ENCODE measurements at regions of chr12 and their contacts with region 1.

Region 1: DNA sequence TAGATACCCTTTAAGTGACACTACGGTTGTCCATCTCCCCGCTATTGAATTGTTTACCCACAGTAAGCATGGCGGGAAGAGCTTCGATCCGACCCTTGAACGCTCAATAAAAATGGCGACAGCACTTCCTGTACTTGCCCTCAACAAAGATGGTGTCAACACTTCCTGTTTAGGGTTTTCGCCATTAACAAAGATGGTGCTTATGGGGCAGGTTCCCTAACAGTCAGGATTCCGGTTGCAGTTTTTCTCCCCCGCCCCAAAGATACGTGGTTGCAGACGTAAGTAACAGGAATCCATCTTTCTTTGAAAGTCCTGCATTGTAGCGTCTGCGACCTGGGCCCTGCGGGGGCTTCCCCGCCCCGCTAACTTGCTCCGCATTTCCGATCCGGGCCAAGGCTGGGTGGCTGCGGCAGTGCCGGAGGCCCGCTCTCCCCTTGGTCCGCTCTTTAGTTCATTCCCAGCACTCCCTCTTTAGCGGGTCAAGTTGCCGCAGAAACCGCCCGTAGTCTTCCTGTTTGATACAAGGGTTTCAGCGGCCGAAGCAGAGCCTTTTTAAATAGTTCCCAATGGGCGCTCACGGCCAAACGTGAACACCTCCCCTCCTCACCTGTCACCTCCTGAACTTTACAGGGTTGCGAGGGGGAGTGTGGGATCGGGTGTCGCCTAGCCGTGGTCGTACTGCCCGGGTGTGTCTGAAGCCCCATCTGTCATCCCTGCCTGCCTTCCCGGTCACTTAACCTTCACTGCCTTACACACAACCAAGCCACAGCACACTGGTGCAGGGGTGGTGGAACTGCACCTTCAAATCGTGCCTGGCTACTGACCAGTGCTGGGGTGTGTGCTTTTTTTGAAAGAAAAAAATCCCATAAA is at the start of gene CRADD:
- DNase-seq: peak; percentile 92
- H3K4me3 Mint-ChIP-seq: peak within 1 kb of the TSS; percentile 89
- H3K27ac Mint-ChIP-seq: peak within 1 kb of the TSS; percentile 99
- H3K4me1 Mint-ChIP-seq: peaks cover 40% of the 10 kb centered on the region
- H3K27me3 Mint-ChIP-seq: peaks cover 9% of the 10 kb centered on the region
- total RNA-seq, gene CRADD: 14.3 to 15.6 TPM

Region 2: GRCh38 chr12:93098077-93098476 is 579.4 kb before region 1 on chr12:
- CTCF ChIA-PET with region 1: no interaction called
- intact Hi-C with region 1: loop called (anchors 10 kb)
- DNase-seq: peak; percentile 91
- H3K4me3 Mint-ChIP-seq: no peak overlapping the region
- H3K27ac Mint-ChIP-seq: peak overlapping the region; percentile 38
- H3K4me1 Mint-ChIP-seq: peaks cover 10% of the 10 kb centered on the region
- H3K27me3 Mint-ChIP-seq: no peaks in the 10 kb centered on the region

Region 3: DNA sequence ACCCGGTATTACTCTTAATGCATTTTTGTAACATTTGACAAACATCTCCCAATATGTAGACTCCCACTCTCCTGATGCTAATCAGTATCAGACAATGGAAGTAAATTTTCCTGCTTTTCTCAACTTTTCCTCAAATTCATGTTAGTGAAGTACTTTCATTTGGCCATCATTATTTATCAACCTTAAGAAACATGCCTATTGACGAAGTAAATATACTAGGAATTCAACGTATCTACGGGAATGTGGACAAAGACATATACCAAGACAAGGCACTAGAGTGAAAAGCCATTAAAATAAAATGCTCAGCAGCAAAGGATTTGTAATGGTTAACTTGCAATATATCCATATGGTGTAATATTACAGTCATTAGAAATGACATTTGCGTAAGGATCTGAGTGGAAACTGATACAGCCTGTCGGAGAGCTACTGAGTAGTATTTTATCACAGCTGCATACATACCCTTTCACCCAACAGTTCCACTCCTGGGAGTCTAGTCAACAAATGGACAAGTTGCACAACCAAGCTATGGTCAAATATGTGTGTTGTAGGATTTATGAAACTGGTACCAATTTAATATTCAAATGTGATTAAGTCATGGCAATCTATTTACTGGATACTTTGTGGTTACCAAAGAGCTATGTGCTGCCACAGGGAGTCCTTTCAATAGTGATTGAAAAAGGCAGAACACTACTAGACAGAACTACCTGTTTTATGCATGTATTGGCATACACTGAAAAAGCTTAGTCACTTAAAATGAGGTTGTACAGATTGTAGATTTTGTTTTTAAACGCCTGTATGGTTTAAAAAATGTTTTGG is 273.2 kb before region 1 on chr12:
- CTCF ChIA-PET with region 1: no interaction called
- intact Hi-C with region 1: no loop called
- DNase-seq: no peak
- H3K4me3 Mint-ChIP-seq: no peak overlapping the region
- H3K27ac Mint-ChIP-seq: no peak overlapping the region
- H3K4me1 Mint-ChIP-seq: peaks cover 35% of the 10 kb centered on the region
- H3K27me3 Mint-ChIP-seq: no peaks in the 10 kb centered on the region

Region 4: DNA sequence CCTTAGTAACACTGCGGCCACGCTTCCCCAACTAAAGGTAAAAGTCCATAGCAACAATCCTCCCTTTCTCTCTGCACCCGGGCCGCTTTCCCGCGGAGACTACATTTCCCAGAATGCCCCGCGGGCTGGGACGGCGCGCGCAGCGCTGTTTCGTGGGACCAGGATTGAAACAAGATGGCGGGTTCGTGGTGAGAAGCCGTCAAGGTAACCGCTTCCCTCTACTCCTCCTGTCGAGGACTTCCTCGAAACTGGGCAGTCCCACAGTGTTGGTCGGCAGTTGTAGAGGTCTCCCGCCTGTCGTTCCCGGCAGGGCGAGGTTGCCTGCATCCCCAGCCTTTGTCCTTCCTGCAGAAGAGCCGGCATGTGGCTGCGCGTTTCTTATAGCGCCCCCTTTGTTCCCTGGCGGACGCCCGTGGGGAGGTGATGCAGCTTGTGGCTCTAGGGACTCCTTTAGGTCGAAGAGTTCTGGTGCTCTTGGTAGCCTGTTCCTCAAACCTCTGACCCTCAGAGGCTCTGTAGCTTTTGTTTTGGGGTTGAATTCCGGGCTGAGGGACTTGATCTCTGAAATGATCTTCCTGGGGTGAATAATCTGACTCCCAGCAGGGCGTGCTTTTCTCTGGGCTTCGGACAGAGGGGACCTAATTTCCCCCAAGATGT is 210.0 kb before region 1 on chr12 and contains the start of gene MRPL42:
- CTCF ChIA-PET with region 1: no interaction called
- intact Hi-C with region 1: loop called (anchors 1 kb)
- DNase-seq: peak; percentile 95
- H3K4me3 Mint-ChIP-seq: peak within 1 kb of the TSS; percentile 95
- H3K27ac Mint-ChIP-seq: peak within 1 kb of the TSS; percentile 91
- H3K4me1 Mint-ChIP-seq: peaks cover 32% of the 10 kb centered on the region
- H3K27me3 Mint-ChIP-seq: no peaks in the 10 kb centered on the region
- total RNA-seq, gene MRPL42: 93.8 to 95.8 TPM

Region 5: DNA sequence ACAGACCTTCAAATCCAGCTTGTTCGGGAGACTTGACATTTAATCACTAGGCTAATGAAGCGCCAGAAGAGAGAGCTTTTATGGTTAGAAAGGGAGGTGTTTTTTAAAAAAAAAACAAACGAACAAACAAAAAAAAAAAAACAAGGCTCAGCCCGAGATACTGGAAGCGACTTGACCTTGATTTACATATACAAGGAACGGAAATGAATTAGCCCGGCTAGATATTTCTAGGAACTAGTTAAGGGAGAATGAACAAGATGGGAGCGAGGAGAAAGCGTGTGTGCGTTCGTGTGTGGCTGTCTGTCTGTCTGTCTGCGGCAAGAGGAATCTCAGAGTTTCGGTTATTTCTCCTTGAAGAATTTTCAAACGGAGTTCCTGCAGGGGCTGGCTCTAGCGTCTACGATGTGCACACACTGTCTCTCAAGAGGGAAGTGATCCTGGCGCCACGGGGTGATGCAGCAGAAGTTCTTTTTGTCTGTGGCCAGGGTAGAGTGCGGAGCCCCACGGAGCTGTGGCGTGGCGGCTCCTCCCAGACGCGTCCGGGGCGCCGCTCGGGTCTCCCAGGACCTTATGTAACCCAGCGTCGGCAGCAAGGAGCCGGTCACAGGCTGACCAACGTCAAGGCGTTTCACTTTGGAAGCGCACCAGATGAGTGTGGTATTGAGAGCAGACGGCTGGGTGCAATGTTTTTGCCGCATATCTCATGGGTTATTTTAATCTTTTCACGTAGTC is 86.1 kb before region 1 on chr12:
- CTCF ChIA-PET with region 1: interaction called, 3 read pairs
- intact Hi-C with region 1: loop called (anchors 1 kb)
- DNase-seq: peak; percentile 45
- H3K4me3 Mint-ChIP-seq: peak overlapping the region; percentile 87
- H3K27ac Mint-ChIP-seq: no peak overlapping the region
- H3K4me1 Mint-ChIP-seq: peaks cover 11% of the 10 kb centered on the region
- H3K27me3 Mint-ChIP-seq: peaks cover 52% of the 10 kb centered on the region

Region 6: DNA sequence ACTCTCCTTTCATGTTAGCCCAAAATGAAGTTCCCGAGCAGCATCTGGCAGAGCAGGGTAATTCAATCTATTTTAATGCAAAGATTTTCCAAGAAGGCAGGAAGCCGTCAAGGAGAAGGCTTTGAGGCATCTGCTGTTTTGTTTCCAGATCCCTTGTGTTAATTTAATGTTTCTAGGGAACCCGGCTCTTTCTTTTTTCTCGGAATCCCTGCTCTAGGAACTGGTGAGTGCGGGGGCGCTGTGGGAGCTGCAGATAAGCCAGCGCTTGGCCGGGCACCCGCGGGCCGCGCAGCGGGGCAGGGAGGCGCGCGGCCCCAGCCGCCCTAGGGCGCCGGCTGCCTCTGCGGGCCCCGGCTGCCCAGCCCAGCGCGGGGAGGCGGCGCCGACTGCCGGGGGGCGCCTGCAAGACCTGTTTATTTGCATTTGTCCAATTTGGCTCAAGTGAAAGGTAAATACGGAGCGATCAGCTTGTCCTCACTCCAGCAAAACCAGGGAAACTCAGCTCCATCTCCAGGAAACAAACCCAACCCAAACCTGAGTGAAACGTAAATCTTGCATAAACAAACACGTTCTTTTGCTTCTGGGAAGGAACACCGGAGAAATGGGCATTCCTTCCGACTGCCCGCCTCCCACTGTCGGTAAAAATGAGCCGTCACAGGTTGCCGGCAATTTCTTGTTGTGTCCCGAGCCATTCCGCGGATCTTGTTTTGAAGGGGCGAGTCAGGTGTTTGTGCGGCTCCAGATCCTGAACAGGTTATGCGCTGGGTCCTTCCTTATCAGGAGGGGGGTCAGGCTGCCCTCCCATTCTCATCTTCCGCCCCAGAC is 64.9 kb after region 1 on chr12:
- CTCF ChIA-PET with region 1: interaction called, 3 read pairs
- intact Hi-C with region 1: loop called (anchors 1 kb)
- DNase-seq: peak; percentile 60
- H3K4me3 Mint-ChIP-seq: peak overlapping the region; percentile 76
- H3K27ac Mint-ChIP-seq: peak overlapping the region; percentile 75
- H3K4me1 Mint-ChIP-seq: peaks cover 46% of the 10 kb centered on the region
- H3K27me3 Mint-ChIP-seq: no peaks in the 10 kb centered on the region

Region 7: DNA sequence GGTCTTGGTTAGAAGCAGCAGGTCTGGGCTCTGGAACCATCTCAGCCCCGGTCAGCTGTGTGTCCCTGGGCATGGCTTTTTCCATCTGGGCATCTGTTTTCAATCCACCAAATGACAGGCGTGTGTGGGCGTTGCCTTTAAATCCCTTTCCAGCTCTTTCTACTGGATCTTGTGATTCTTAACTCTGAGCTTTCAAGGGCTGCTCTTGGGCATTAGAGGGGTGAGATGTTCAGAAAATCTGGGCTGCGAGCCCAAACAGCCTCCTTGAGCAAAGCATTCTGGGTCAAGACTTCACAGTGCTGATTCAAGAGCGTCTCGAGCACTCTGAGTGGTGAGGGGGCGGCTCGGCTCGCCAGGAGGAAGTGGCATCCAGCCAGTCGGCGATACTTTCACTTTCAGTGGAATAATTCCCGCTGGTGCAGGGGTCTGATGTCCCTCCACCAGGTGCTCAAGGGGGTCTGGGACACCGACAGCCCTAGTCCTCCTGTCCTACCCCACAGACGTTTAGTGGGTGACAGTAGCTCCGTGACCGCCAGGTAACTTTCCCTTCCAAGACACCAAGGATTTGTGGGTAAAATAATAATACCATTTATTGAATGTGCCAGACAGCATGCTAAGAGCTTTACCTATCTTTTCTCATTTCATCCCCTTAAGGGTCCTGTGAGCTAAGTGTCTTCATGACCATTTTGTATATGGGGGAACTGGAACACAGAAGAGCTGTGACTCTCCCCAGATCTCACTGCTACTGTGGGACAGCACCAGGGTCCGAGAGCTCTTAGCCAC is 585.0 kb after region 1 on chr12:
- CTCF ChIA-PET with region 1: no interaction called
- intact Hi-C with region 1: loop called (anchors 10 kb)
- DNase-seq: peak; percentile 83
- H3K4me3 Mint-ChIP-seq: peak overlapping the region; percentile 89
- H3K27ac Mint-ChIP-seq: peak overlapping the region; percentile 96
- H3K4me1 Mint-ChIP-seq: peaks cover 31% of the 10 kb centered on the region
- H3K27me3 Mint-ChIP-seq: no peaks in the 10 kb centered on the region

Measured in activated naive CD4-positive, alpha-beta T cell treated with anti-CD3 and anti-CD28 coated beads for 36 hours (primary cell).